Psoas muscle (tissue), 8 donors: ENCODE measurements at regions of chr18 and their contacts with region 1.

Region 1: DNA sequence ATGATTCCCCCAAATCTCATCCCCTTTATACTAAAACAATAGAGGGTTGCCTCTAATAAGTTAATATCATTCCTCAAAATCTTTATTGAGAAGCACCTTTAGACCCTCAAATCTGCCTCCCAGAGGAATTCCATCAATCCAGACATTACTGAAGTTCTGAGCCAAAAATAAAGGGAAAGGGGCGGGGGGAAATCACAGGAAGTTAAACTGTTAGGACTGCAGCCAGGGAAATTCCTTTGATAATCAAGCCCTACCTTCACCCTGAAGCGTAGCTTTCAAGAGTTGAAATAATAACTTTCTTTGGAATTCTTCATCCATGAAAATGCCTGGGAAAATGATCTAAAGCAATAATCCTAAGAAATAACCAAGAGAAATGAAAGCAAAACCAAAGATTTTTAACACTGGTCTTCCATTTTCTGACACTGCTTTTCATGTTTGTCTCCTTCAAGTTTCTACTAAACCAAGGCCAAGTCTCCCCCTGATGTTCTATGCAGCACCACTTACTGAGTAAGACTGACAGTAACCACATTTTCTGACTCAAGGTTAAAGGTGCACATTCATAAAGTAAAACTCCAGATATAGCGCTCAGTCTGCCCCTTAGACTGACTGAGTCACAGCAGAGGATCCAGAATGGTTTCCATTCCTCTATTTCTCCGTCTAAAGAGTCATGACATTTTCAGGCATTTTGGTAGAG is 78.2 kb downstream of the TCF4 start:
- DNase-seq: no peak
- ATAC-seq: peak; percentile 17 to 66 (median 38)
- H3K4me3 ChIP-seq: peak overlapping the region; percentile 22
- H3K27ac ChIP-seq: peak overlapping the region; percentile 72
- H3K4me1 ChIP-seq: peaks cover 18% of the 10 kb centered on the region
- H3K27me3 ChIP-seq: no peaks in the 10 kb centered on the region
- CTCF ChIP-seq: no peak

Region 2: GRCh38 chr18:54720620-54721019 is 789.2 kb before region 1 on chr18:
- intact Hi-C with region 1: no loop called
- DNase-seq: no peak
- ATAC-seq: no peak
- H3K4me3 ChIP-seq: no peak overlapping the region
- H3K27ac ChIP-seq: no peak overlapping the region
- H3K4me1 ChIP-seq: no peaks in the 10 kb centered on the region
- H3K27me3 ChIP-seq: peaks cover 0 to 2% (median 0%) of the 10 kb centered on the region in 3 donors
- CTCF ChIP-seq: no peak

Region 3: DNA sequence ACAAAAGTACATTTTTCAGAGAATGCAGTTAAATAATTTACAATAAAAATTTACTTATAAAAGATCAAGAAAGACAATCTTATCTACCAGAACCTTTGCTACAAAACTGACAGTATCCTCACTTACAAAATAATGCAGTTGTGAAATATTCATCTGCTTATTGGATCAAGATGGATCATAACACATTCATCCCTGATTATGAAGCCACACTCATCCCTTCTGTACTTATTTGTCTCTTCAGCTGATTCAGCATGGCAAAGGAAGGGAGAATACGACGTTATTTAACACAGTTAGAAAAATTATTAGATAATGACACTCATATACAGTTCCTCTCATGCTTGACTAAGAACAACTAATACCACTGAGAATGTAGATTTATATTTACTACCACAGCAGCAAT is 31.8 kb after region 1 on chr18:
- intact Hi-C with region 1: loop called in 1 of 2 experiments (anchors 5 kb)
- DNase-seq: no peak
- ATAC-seq: peak in 1 of 4 donors; percentile 44
- H3K4me3 ChIP-seq: no peak overlapping the region
- H3K27ac ChIP-seq: no peak overlapping the region
- H3K4me1 ChIP-seq: peaks cover 22% of the 10 kb centered on the region
- H3K27me3 ChIP-seq: no peaks in the 10 kb centered on the region
- CTCF ChIP-seq: no peak

Region 4: GRCh38 chr18:55753643-55754263 is 244.0 kb after region 1 on chr18:
- intact Hi-C with region 1: no loop called
- DNase-seq: no peak
- ATAC-seq: peak; percentile 53 to 87 (median 66)
- H3K4me3 ChIP-seq: no peak overlapping the region
- H3K27ac ChIP-seq: no peak overlapping the region
- H3K4me1 ChIP-seq: peaks cover 7% of the 10 kb centered on the region
- H3K27me3 ChIP-seq: no peaks in the 10 kb centered on the region
- CTCF ChIP-seq: no peak

Region 5: GRCh38 chr18:55821219-55821618 is 311.4 kb after region 1 on chr18:
- intact Hi-C with region 1: no loop called
- DNase-seq: no peak
- ATAC-seq: no peak
- H3K4me3 ChIP-seq: no peak overlapping the region
- H3K27ac ChIP-seq: no peak overlapping the region
- H3K4me1 ChIP-seq: no peaks in the 10 kb centered on the region
- H3K27me3 ChIP-seq: no peaks in the 10 kb centered on the region
- CTCF ChIP-seq: no peak